Ovary (tissue), 10 donors: ENCODE measurements at regions of chr4 and their contacts with region 1.

Region 1: GRCh38 chr4:108018040-108018883 is 28.6 kb downstream of the HADH start:
- DNase-seq: peak; percentile 60 to 81 (median 78)
- H3K4me3 ChIP-seq: no peak overlapping the region
- H3K27ac ChIP-seq: no peak overlapping the region
- H3K4me1 ChIP-seq: no peaks in the 10 kb centered on the region
- H3K27me3 ChIP-seq: no peaks in the 10 kb centered on the region
- CTCF ChIP-seq: peak; percentile 47 to 74 (median 68)
- EP300 ChIP-seq: no peak
- POLR2A ChIP-seq: no peak

Region 2: DNA sequence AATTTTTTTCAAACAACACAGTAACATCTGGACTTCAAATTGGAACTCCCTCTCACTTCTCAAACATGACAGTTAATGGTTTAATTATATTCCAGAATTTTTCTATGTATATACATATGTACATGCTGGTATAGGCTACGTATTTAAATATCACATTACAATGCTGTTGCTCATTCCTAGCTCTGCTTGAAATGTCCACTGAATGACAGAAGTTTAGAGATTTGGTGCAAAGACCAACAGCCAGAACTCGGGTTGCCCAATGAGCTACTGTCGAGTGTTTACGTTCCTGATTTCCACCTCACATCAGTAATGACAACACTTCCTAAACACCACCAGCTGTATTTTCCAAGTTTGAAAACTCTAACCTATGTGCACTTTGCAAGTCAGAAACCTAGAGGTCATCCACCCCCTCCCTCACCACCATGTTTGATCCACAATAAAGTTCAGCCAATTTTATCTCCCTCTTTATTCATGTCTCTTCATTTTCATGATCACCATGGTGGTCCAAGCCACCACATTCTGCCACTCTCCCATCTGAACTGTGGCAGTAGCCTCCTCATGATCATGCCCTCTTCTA is 552.8 kb after region 1 on chr4:
- intact Hi-C with region 1: loop called in 3 of 4 experiments (anchors 10 kb)
- DNase-seq: no peak
- H3K4me3 ChIP-seq: no peak overlapping the region
- H3K27ac ChIP-seq: no peak overlapping the region
- H3K4me1 ChIP-seq: no peaks in the 10 kb centered on the region
- H3K27me3 ChIP-seq: no peaks in the 10 kb centered on the region
- CTCF ChIP-seq: no peak
- EP300 ChIP-seq: no peak
- POLR2A ChIP-seq: no peak